Activated T-helper 1 cell treated with anti-CD3 and anti-CD28 coated beads, Interleukin-12 subunit alpha, Interleukin-12 subunit beta, Interleukin-2, Interleukin-4 antibody, amounts not matched to agents 30 ng/mL and 10 ng/mL and 1 ng/mL, durations not matched to agents 14 hours and 24 hours and 36 hours (primary cell): ENCODE measurements at regions of chr3 and their contacts with region 1.

Region 1: GRCh38 chr3:22117751-22118346 is 366.8 kb upstream of the ZNF385D start:
- DNase-seq: no peak
- H3K4me3 Mint-ChIP-seq: no peak overlapping the region
- H3K27ac Mint-ChIP-seq: no peak overlapping the region
- H3K4me1 Mint-ChIP-seq: no peaks in the 10 kb centered on the region
- H3K27me3 Mint-ChIP-seq: no peaks in the 10 kb centered on the region

Region 2: DNA sequence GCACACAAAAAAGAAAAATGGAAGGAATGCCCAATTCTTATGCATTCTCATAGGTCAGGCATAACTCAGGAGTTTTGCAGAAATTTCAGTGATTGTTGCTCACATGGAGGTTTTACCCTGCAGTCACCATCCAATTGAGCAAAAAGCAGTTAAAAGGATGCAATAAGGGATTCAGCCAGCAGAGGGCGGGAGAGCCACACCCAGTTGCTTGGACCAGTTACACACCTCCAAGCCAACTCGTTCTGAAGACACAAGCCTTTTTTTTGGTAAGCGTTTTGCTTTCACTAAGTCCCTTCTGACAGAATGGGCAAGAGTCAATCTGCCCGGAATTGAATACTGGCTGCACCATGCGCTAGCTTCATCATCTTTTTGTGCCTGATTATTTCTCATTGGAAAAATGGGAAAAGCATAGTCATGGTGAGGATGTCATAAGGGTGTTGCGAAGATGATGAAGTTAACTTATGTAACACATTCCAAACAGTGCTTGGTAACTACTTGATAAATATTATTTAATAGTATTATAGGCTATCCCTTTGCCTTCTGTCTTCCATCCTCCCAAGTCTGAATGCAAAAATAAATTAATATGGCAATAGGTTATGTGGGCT is 1777.4 kb before region 1 on chr3:
- intact Hi-C with region 1: loop called (anchors 5 kb)
- DNase-seq: peak; percentile 48
- H3K4me3 Mint-ChIP-seq: no peak overlapping the region
- H3K27ac Mint-ChIP-seq: no peak overlapping the region
- H3K4me1 Mint-ChIP-seq: no peaks in the 10 kb centered on the region
- H3K27me3 Mint-ChIP-seq: peaks cover 1% of the 10 kb centered on the region

Region 3: GRCh38 chr3:20511863-20512505 is 1605.9 kb before region 1 on chr3:
- intact Hi-C with region 1: loop called (anchors 5 kb)
- DNase-seq: no peak
- H3K4me3 Mint-ChIP-seq: no peak overlapping the region
- H3K27ac Mint-ChIP-seq: no peak overlapping the region
- H3K4me1 Mint-ChIP-seq: no peaks in the 10 kb centered on the region
- H3K27me3 Mint-ChIP-seq: peaks cover 2% of the 10 kb centered on the region